Uterus (tissue), 4 donors: ENCODE measurements at regions of chr3 and their contacts with region 1.

Region 1: DNA sequence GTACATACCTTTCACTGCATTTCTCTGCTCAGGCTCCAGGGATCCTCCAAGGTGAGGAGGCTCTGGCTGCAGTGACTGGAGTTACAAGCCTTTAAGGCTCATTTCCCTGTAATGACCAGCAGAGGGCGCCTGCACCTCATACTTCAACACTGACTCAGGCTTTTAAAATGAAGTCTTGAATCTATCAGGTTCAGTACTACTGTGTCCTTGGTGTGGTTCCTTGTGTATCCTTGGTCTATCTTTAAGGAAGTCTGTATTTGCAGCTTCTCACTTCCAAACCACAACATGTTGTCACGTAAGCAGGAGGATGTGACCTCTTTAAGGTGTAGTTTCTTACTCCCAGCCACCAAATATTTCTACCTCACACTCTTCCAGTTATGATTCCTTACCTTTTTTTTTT is 122.5 kb upstream of the ZBED2 start:
- DNase-seq: peak; percentile 72 to 85
- H3K4me3 ChIP-seq: no peak overlapping the region
- H3K27ac ChIP-seq: peak overlapping the region in 1 of 2 donors; percentile 26
- H3K4me1 ChIP-seq: no peaks in the 10 kb centered on the region
- H3K27me3 ChIP-seq: no peaks in the 10 kb centered on the region
- CTCF ChIP-seq: peak; percentile 88 to 98 (median 95)
- POLR2A ChIP-seq: no peak

Region 2: DNA sequence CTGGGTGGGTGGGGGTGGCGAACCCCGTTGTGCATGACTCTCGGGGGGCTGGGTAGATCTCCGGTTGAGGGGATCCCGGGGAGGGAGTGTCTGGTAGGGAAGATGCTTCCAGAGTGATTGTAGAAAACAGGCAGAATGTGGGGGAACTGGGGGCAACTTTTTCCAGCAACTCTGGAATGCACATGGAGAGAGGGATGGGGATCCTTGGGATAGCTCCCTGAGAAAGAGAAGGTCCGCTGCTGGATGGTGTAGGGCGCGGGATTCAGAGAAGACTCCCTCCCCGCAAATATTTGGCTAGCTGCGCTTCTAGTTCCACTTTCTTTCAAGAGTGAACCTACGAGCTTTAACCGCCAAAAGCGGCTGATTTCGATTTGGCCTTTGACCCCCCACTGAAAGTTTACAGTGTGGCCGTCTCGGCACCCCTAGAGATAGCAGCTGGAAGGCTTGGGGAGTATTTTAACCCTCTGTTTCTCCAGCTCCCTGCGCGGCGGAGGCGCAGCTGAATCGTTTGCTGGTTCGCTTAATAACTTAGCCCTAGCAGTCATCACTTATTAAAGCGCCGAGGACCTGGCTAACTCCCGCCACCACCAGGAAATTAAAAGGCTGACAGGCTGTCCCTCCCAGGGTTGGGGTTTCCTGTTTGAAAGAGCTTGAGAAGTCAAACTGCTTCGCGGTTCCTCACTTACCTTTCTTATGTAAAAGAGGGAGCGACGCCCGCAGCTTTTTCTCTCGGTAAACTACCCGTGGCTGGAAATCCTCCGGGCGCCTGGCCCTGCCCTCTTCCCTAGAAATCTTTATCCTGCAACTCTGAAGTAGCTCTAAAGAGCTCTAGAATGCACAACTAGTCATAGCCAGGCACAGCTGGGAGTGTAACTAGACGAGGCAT is 142.6 kb after region 1 on chr3:
- intact Hi-C with region 1: loop called (anchors 10 kb)
- DNase-seq: peak; percentile 76 to 86
- H3K4me3 ChIP-seq: peak overlapping the region; percentile 85 to 87
- H3K27ac ChIP-seq: peak overlapping the region; percentile 96 to 97
- H3K4me1 ChIP-seq: no peaks in the 10 kb centered on the region
- H3K27me3 ChIP-seq: no peaks in the 10 kb centered on the region
- CTCF ChIP-seq: peak; percentile 53 to 73 (median 64)
- POLR2A ChIP-seq: peak; percentile 59 to 75

Region 3: DNA sequence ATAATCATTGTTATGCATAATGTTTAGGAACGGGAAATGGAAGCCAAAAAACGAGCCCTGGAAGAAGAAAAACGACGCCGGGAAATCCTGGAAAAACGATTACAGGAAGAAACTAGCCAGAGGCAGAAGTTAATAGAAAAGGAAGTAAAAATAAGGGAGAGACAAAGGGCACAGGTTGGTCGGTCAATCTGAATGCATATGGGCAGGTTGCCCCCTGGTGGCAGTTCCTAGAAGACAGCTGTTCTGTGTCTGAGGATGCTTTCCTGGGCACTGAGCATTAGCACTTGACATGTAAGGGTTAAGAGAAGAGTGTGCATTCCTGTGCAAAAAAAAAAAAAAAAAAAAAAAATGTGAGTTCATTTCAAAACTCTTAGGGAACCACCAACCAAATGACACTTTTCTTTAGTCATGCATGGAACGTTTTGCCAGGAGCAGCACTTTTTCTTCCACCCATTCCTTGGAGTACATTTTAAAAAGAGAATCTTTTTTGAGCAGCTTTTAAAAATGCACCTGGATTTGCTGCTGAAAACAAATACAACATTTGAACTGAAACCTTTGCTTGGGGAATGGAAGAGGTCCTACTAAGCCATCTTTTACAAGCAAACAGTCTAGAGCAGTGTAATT is 250.2 kb after region 1 on chr3:
- intact Hi-C with region 1: loop called (anchors 5 kb)
- DNase-seq: peak; percentile 77 to 86
- H3K4me3 ChIP-seq: no peak overlapping the region
- H3K27ac ChIP-seq: peak overlapping the region; percentile 20 to 54
- H3K4me1 ChIP-seq: peaks cover 0 to 13% of the 10 kb centered on the region in 2 donors
- H3K27me3 ChIP-seq: no peaks in the 10 kb centered on the region
- CTCF ChIP-seq: peak; percentile 84 to 87 (median 85)
- POLR2A ChIP-seq: no peak